ENCODE measurements at regions of chr4 and their contacts with region 1.

Region 1: DNA sequence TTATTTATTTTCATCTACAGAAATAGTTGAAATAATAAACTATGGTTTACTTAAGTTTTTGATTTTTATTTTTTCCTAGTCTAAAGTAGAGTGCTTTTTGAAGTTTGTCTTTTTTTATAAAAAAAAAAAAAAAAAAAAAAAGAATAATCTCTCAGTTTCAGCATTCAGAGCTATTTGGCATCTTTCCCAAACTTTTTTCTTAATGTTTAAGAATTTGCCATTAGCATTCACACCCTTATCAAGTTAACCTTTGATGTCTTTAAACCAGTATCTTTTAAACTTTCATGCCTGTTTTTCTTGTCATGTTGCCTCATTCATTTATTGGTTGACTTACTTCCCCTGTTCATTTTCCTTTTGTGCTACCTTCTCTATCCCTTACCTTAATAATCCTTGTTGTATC is 60.9 kb upstream of the FHDC1 start:
- DNase-seq: no peak
- H3K4me3 ChIP-seq: no peak overlapping the region
- H3K27me3 ChIP-seq: no peaks in the 10 kb centered on the region
- CTCF ChIP-seq: no peak

Region 2: GRCh38 chr4:152894673-152895072 is 19.4 kb after region 1 on chr4:
- CTCF ChIA-PET with region 1: interaction called, 3 read pairs
- POLR2A ChIA-PET with region 1: interaction called, 16 read pairs
- DNase-seq: peak; percentile 2
- H3K4me3 ChIP-seq: no peak overlapping the region
- H3K27me3 ChIP-seq: no peaks in the 10 kb centered on the region
- CTCF ChIP-seq: no peak